Prostate gland (tissue), 2 donors: ENCODE measurements at regions of chr1 and their contacts with region 1.

Region 1: DNA sequence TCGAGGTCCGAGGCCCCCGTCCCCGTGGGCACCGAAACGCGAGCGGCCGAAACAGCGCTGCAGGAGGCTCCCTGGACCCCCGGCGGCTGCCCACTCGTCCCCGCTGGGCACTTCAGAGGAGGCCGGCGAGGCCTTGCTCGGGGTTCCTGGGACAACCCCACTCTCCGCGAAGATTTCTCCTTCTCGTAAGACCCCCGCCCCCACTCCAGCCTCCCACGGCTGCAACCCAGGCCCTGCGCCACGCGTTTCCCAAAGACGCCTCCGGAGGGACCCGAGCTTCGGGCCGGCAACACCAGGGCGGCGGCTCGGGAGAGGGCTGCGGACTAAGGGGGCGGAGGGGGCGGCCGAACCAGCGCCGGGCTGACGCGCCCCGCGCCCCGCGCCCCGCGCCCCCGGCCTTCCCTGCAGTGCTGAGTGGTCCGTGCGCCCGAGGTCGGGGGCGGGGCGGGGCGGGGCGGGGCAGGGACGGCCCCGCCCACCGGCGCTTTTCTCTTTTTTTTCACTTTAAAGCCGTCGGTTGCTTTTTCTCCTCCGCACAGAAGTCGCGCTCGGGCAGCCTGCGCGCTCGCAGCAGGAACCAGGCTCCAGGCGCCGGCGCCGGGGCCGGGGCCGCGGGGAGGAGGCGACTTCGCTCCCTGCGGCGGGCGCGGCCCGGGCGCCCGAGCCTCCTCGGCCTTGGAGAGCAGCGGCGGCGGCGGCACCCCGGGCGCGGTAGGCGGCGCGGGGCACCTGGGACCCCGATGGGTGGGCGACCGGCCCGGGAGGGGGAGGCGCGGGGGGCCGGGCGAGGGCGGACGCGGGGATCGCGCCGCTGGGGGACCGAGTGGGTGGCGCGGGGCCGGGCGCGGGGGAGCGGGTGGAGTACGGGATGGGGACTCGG is at the start of gene SPSB1:
- DNase-seq: peak; percentile 78
- H3K4me3 ChIP-seq: peak within 1 kb of the TSS; percentile 81 to 94
- H3K27ac ChIP-seq: peak within 1 kb of the TSS; percentile 86 to 92
- H3K4me1 ChIP-seq: no peaks in the 10 kb centered on the region
- H3K27me3 ChIP-seq: no peaks in the 10 kb centered on the region
- CTCF ChIP-seq: peak in 1 of 4 experiments; percentile 13
- POLR2A ChIP-seq: peak; percentile 73
- total RNA-seq, gene SPSB1: 29.0 to 57.1 TPM

Region 2: GRCh38 chr1:9371391-9371935 is 78.9 kb after region 1 on chr1:
- intact Hi-C with region 1: loop called (anchors 5 kb)
- DNase-seq: peak; percentile 16
- H3K4me3 ChIP-seq: no peak overlapping the region
- H3K27ac ChIP-seq: peak overlapping the region; percentile 56 to 57
- H3K4me1 ChIP-seq: no peaks in the 10 kb centered on the region
- H3K27me3 ChIP-seq: no peaks in the 10 kb centered on the region
- CTCF ChIP-seq: no peak
- POLR2A ChIP-seq: no peak

Region 3: GRCh38 chr1:9455487-9456234 is 163.1 kb after region 1 on chr1:
- intact Hi-C with region 1: loop called (anchors 2 kb)
- DNase-seq: peak; percentile 53
- H3K4me3 ChIP-seq: no peak overlapping the region
- H3K27ac ChIP-seq: no peak overlapping the region
- H3K4me1 ChIP-seq: no peaks in the 10 kb centered on the region
- H3K27me3 ChIP-seq: no peaks in the 10 kb centered on the region
- CTCF ChIP-seq: peak; percentile 73 to 81 (median 80)
- POLR2A ChIP-seq: no peak

Region 4: GRCh38 chr1:9494929-9495758 is 202.5 kb after region 1 on chr1:
- intact Hi-C with region 1: loop called (anchors 5 kb)
- DNase-seq: no peak
- H3K4me3 ChIP-seq: no peak overlapping the region
- H3K27ac ChIP-seq: no peak overlapping the region
- H3K4me1 ChIP-seq: no peaks in the 10 kb centered on the region
- H3K27me3 ChIP-seq: no peaks in the 10 kb centered on the region
- CTCF ChIP-seq: peak; percentile 95 to 99 (median 96)
- POLR2A ChIP-seq: no peak

Region 5: GRCh38 chr1:9942939-9943788 is 650.6 kb after region 1 on chr1 and contains the starts of genes LZIC and NMNAT1:
- intact Hi-C with region 1: no loop called
- DNase-seq: peak; percentile 89
- H3K4me3 ChIP-seq: peak within 1 kb of the TSS; percentile 63 to 77
- H3K27ac ChIP-seq: peak within 1 kb of the TSS; percentile 79 to 86
- H3K4me1 ChIP-seq: no peaks in the 10 kb centered on the region
- H3K27me3 ChIP-seq: no peaks in the 10 kb centered on the region
- CTCF ChIP-seq: peak in 2 of 4 experiments; percentile 23 to 40
- POLR2A ChIP-seq: peak; percentile 79
- total RNA-seq, gene LZIC: 21.5 to 42.2 TPM
- total RNA-seq, gene NMNAT1: 7.2 to 8.7 TPM